Right lobe of liver (tissue), 6 donors: ENCODE measurements at regions of chr7 and their contacts with region 1.

Region 1: GRCh38 chr7:48109848-48110663 is 21.0 kb downstream of the UPP1 start:
- DNase-seq: peak; percentile 84 to 89 (median 88)
- ATAC-seq: peak; percentile 96 to 97 (median 96)
- H3K4me3 ChIP-seq: no peak overlapping the region
- H3K27ac ChIP-seq: peak overlapping the region in 2 of 3 donors; percentile 37 to 58
- H3K4me1 ChIP-seq: peaks cover 0 to 14% (median 6%) of the 10 kb centered on the region in 4 donors
- H3K27me3 ChIP-seq: no peaks in the 10 kb centered on the region
- CTCF ChIP-seq: peak; percentile 99 to 100 (median 100)
- POLR2A ChIP-seq: no peak

Region 2: GRCh38 chr7:47807756-47808155 is 302.3 kb before region 1 on chr7:
- intact Hi-C with region 1: no loop called
- DNase-seq: no peak
- ATAC-seq: no peak
- H3K4me3 ChIP-seq: no peak overlapping the region
- H3K27ac ChIP-seq: no peak overlapping the region
- H3K4me1 ChIP-seq: peaks cover 0 to 14% (median 0%) of the 10 kb centered on the region in 4 donors
- H3K27me3 ChIP-seq: no peaks in the 10 kb centered on the region
- CTCF ChIP-seq: no peak
- POLR2A ChIP-seq: no peak

Region 3: DNA sequence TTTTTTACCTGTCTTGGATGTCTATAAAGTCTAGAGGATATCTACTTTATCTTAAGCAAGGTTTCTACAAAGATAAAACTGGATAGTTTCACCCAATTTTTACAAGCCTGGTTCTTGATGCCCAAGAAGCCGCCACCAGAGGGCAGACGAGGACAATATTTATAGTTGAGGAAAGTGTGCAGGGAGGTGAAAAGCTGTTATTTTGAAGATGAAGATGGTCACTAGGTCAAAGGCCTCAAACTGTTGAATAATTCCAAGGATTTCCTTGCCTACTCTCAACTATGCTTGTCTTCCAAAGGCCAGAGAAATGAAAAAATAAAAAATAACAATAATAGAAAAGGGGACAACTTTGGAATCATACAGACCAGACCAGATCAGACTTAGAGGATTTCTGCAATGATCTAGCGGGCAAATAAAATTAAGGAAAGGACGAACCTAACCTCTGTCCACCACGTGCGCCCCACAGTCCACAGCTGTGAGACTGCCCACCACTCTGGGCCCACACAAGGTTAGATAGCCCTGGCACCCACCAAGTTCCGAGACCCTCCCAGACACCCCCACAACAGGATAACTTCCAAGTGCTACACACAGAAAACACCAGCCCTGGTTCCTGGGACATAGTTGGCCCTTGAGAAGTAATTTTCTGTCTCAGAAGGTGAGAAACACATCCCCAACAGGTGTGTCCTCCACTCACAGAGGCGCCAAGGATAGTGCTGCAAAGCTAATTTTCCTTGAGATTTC is 164.6 kb before region 1 on chr7:
- intact Hi-C with region 1: loop called in 1 of 2 experiments (anchors 5 kb)
- DNase-seq: peak; percentile 70 to 78 (median 76)
- ATAC-seq: peak; percentile 59 to 80 (median 68)
- H3K4me3 ChIP-seq: no peak overlapping the region
- H3K27ac ChIP-seq: no peak overlapping the region
- H3K4me1 ChIP-seq: no peaks in the 10 kb centered on the region
- H3K27me3 ChIP-seq: no peaks in the 10 kb centered on the region
- CTCF ChIP-seq: peak; percentile 76 to 85 (median 84)
- POLR2A ChIP-seq: no peak

Region 4: GRCh38 chr7:47988501-47989386 is 121.3 kb before region 1 on chr7:
- intact Hi-C with region 1: loop called in 1 of 2 experiments (anchors 10 kb)
- DNase-seq: no peak
- ATAC-seq: no peak
- H3K4me3 ChIP-seq: no peak overlapping the region
- H3K27ac ChIP-seq: no peak overlapping the region
- H3K4me1 ChIP-seq: peaks cover 0 to 3% (median 0%) of the 10 kb centered on the region in 4 donors
- H3K27me3 ChIP-seq: no peaks in the 10 kb centered on the region
- CTCF ChIP-seq: peak in 3 of 4 donors; percentile 25 to 38 (median 36)
- POLR2A ChIP-seq: no peak

Region 5: GRCh38 chr7:48004638-48005037 is 105.4 kb before region 1 on chr7:
- intact Hi-C with region 1: loop called in 1 of 2 experiments (anchors 10 kb)
- DNase-seq: no peak
- ATAC-seq: no peak
- H3K4me3 ChIP-seq: no peak overlapping the region
- H3K27ac ChIP-seq: no peak overlapping the region
- H3K4me1 ChIP-seq: no peaks in the 10 kb centered on the region
- H3K27me3 ChIP-seq: no peaks in the 10 kb centered on the region
- CTCF ChIP-seq: no peak
- POLR2A ChIP-seq: no peak